ENCODE measurements at regions of chr14 and their contacts with region 1.

Region 1: GRCh38 chr14:62117010-62117750 is 355.0 kb downstream of the SNAPC1 start:
- DNase-seq: peak; percentile 64 to 76
- H3K4me3 ChIP-seq: no peak overlapping the region
- H3K4me1 ChIP-seq: no peaks in the 10 kb centered on the region
- H3K27me3 ChIP-seq: peaks cover 38% of the 10 kb centered on the region

Region 2: GRCh38 chr14:61894452-61895077 is 222.6 kb before region 1 on chr14:
- in situ Hi-C with region 1: loop called (anchors 25 kb)
- DNase-seq: peak; percentile 25 to 81
- H3K4me3 ChIP-seq: no peak overlapping the region
- H3K4me1 ChIP-seq: no peaks in the 10 kb centered on the region
- H3K27me3 ChIP-seq: 0 out of 2 replicates have a peak, but pooled peaks cover 1% of the 10 kb centered on the region

Region 3: DNA sequence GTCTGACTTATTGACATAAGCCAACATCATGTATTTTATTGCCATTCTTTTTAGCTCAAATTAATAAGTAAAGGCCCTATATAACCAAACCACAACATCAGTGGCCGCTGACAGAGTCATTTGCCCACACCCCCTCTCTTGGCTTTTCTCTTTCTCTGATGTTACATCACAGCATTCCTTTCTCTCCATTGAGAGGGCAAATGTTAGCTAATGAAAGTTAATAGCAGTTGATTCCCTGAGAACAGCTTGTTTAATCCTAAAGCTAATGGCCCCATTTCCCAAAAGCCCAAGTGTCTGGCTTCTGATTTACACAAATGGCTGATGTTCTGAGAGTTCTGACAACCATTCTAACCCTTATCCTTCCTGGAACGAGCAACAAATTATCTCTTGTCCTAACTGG is 46.1 kb before region 1 on chr14:
- in situ Hi-C with region 1: no loop called
- DNase-seq: no peak
- H3K4me3 ChIP-seq: no peak overlapping the region
- H3K4me1 ChIP-seq: no peaks in the 10 kb centered on the region
- H3K27me3 ChIP-seq: no peaks in the 10 kb centered on the region; the same call in 1 of the 2 replicates